B cell (primary cell): ENCODE measurements at regions of chr17 and their contacts with region 1.

Region 1: DNA sequence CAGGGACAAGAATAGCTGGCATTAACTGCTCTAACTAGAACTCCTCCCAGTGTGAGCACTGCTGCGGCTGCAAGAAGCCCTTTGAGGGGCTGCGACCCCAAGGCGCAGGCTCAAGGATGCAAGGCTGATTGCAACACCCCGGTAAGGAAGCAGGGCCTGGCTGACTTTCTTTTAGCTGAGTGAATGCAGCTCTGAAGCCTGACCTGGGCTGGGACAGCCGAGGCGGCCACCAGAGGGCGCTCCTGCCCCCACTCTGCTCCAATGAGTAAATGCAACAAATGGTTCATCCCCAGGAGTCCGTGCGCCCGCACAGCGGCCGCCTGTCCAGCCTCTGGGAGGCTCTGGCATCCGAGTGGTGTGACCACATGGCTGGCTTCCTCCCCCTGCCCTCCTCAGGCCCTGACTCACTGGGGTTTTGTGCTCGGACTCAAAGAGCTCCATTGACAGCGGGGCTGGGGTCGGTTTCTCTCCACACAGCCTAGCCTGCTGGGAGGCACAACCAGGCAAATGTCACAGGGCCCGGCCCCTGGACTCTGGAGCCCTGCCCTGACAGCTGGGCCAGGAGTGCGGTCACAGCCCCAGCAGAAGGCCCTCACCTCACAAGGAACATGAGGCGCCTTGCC is at the start of gene SMIM5:
- DNase-seq: peak; percentile 86
- ATAC-seq: peak; percentile 85
- H3K4me3 ChIP-seq: no peak within 1 kb of the TSS
- H3K4me3 Mint-ChIP-seq: no peak within 1 kb of the TSS
- H3K27ac ChIP-seq: no peak within 1 kb of the TSS
- H3K27ac Mint-ChIP-seq: no peak within 1 kb of the TSS
- H3K4me1 ChIP-seq: peaks cover 9 to 18% of the 10 kb centered on the region in 2 donors
- H3K4me1 Mint-ChIP-seq: peaks cover 13% of the 10 kb centered on the region
- H3K27me3 ChIP-seq: no peaks in the 10 kb centered on the region
- H3K27me3 Mint-ChIP-seq: no peaks in the 10 kb centered on the region
- CTCF ChIP-seq: peak; percentile 95
- total RNA-seq, gene SMIM5: 0.61 and 0.62 TPM in 2 replicates

Region 2: GRCh38 chr17:75430159-75430974 is 202.6 kb before region 1 on chr17:
- CTCF ChIA-PET with region 1: interaction called, 20 read pairs
- POLR2A ChIA-PET with region 1: no interaction called
- intact Hi-C with region 1: loop called (anchors 1 kb)
- DNase-seq: no peak
- ATAC-seq: no peak
- H3K4me3 ChIP-seq: no peak overlapping the region
- H3K4me3 Mint-ChIP-seq: no peak overlapping the region
- H3K27ac ChIP-seq: no peak overlapping the region
- H3K27ac Mint-ChIP-seq: no peak overlapping the region
- H3K4me1 ChIP-seq: peaks cover 6 to 7% of the 10 kb centered on the region in 2 donors
- H3K4me1 Mint-ChIP-seq: peaks cover 11% of the 10 kb centered on the region
- H3K27me3 ChIP-seq: peaks cover 0 to 4% (median 0%) of the 10 kb centered on the region in 4 experiments
- H3K27me3 Mint-ChIP-seq: peaks cover 15% of the 10 kb centered on the region
- CTCF ChIP-seq: no peak

Region 3: DNA sequence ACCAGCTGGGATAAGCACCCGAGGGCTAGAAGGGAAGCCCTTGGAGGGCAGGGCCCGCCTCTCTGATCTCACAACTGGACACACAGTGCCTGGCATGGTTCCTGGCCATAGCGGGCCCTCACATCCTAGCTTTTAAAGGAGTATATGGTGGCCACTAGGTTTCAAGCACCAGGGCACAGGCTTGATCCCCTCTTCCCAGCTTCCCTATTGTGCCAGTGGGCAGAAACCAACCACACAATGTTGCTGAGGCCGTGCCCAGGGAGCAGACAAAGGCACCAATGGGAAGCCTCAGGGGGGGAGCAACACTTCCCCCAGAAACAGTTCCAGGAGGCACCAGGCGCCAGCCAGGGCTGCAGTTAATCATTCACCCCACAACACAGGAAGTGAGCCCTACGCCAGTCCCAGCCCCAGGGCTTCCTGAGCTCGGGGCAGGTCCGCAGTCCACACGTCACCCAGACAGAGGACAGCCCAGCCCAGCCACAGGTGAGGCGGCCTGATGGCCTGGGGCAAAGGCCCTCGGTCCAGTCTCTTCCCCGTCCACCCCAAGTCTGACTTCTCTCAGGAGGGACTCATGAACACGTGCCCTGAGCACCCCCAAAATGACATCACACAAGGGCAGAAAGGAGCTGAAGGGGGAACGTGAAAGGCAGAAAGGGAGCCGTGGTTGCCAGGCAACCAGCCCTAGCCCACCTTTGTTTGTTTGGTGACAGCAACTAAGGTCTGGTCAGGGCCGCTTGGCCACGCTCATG is 13.1 kb after region 1 on chr17:
- CTCF ChIA-PET with region 1: interaction called, 78 read pairs
- POLR2A ChIA-PET with region 1: no interaction called
- intact Hi-C with region 1: no loop called
- DNase-seq: peak; percentile 59
- ATAC-seq: peak; percentile 64
- H3K4me3 ChIP-seq: no peak overlapping the region
- H3K4me3 Mint-ChIP-seq: peak overlapping the region; percentile 49
- H3K27ac ChIP-seq: peak overlapping the region; percentile 18 to 66
- H3K27ac Mint-ChIP-seq: peak overlapping the region; percentile 70
- H3K4me1 ChIP-seq: peaks cover 8 to 12% of the 10 kb centered on the region in 2 donors
- H3K4me1 Mint-ChIP-seq: peaks cover 13% of the 10 kb centered on the region
- H3K27me3 ChIP-seq: no peaks in the 10 kb centered on the region
- H3K27me3 Mint-ChIP-seq: no peaks in the 10 kb centered on the region
- CTCF ChIP-seq: no peak

Region 4: DNA sequence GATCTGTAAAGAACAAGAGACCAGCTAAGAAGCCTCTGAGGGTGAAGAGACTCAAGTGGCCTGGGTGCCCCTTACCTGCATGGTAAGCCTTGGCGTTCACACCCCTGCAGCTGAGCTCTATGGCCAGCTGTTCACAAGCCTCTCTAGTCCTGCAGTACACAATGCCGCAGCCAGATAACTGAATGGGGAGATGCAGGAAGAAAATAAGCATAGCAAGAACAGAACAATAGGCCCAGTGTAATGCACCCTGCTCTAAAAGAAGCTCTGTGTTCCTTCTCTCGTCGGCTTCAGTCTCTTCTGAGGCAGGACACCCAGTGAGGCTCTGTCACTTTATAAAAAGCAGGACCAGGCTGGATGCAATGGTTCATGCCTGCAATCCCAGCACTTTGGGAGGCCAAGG is 28.6 kb after region 1 on chr17:
- CTCF ChIA-PET with region 1: interaction called, 23 read pairs
- POLR2A ChIA-PET with region 1: interaction called, 3 read pairs
- intact Hi-C with region 1: no loop called
- DNase-seq: no peak
- ATAC-seq: no peak
- H3K4me3 ChIP-seq: no peak overlapping the region
- H3K4me3 Mint-ChIP-seq: no peak overlapping the region
- H3K27ac ChIP-seq: no peak overlapping the region
- H3K27ac Mint-ChIP-seq: peak overlapping the region; percentile 34
- H3K4me1 ChIP-seq: peaks cover 29 to 32% of the 10 kb centered on the region in 2 donors
- H3K4me1 Mint-ChIP-seq: peaks cover 29% of the 10 kb centered on the region
- H3K27me3 ChIP-seq: no peaks in the 10 kb centered on the region
- H3K27me3 Mint-ChIP-seq: no peaks in the 10 kb centered on the region
- CTCF ChIP-seq: no peak

Region 5: GRCh38 chr17:75673487-75673886 is 40.5 kb after region 1 on chr17:
- CTCF ChIA-PET with region 1: interaction called, 44 read pairs
- POLR2A ChIA-PET with region 1: no interaction called
- intact Hi-C with region 1: loop called (anchors 1 kb)
- DNase-seq: no peak
- ATAC-seq: no peak
- H3K4me3 ChIP-seq: no peak overlapping the region
- H3K4me3 Mint-ChIP-seq: no peak overlapping the region
- H3K27ac ChIP-seq: no peak overlapping the region
- H3K27ac Mint-ChIP-seq: no peak overlapping the region
- H3K4me1 ChIP-seq: peaks cover 0 to 2% of the 10 kb centered on the region in 2 donors
- H3K4me1 Mint-ChIP-seq: peaks cover 20% of the 10 kb centered on the region
- H3K27me3 ChIP-seq: no peaks in the 10 kb centered on the region
- H3K27me3 Mint-ChIP-seq: no peaks in the 10 kb centered on the region
- CTCF ChIP-seq: no peak

Region 6: GRCh38 chr17:75684924-75685323 is 52.0 kb after region 1 on chr17:
- CTCF ChIA-PET with region 1: interaction called, 11 read pairs
- POLR2A ChIA-PET with region 1: no interaction called
- intact Hi-C with region 1: no loop called
- DNase-seq: no peak
- ATAC-seq: no peak
- H3K4me3 ChIP-seq: no peak overlapping the region
- H3K4me3 Mint-ChIP-seq: no peak overlapping the region
- H3K27ac ChIP-seq: no peak overlapping the region
- H3K27ac Mint-ChIP-seq: no peak overlapping the region
- H3K4me1 ChIP-seq: peaks cover 33 to 46% of the 10 kb centered on the region in 2 donors
- H3K4me1 Mint-ChIP-seq: peaks cover 51% of the 10 kb centered on the region
- H3K27me3 ChIP-seq: no peaks in the 10 kb centered on the region
- H3K27me3 Mint-ChIP-seq: no peaks in the 10 kb centered on the region
- CTCF ChIP-seq: no peak

Region 7: GRCh38 chr17:75738218-75738802 is 105.3 kb after region 1 on chr17:
- CTCF ChIA-PET with region 1: interaction called, 17 read pairs
- POLR2A ChIA-PET with region 1: no interaction called
- intact Hi-C with region 1: no loop called
- DNase-seq: no peak
- ATAC-seq: peak; percentile 24
- H3K4me3 ChIP-seq: no peak overlapping the region
- H3K4me3 Mint-ChIP-seq: no peak overlapping the region
- H3K27ac ChIP-seq: no peak overlapping the region
- H3K27ac Mint-ChIP-seq: no peak overlapping the region
- H3K4me1 ChIP-seq: peaks cover 4 to 10% of the 10 kb centered on the region in 2 donors
- H3K4me1 Mint-ChIP-seq: peaks cover 4% of the 10 kb centered on the region
- H3K27me3 ChIP-seq: peaks cover 0 to 4% (median 0%) of the 10 kb centered on the region in 4 experiments
- H3K27me3 Mint-ChIP-seq: no peaks in the 10 kb centered on the region
- CTCF ChIP-seq: no peak

Region 8: GRCh38 chr17:75834944-75835670 is 202.1 kb after region 1 on chr17:
- CTCF ChIA-PET with region 1: no interaction called
- POLR2A ChIA-PET with region 1: no interaction called
- intact Hi-C with region 1: no loop called
- DNase-seq: no peak
- ATAC-seq: no peak
- H3K4me3 ChIP-seq: no peak overlapping the region
- H3K4me3 Mint-ChIP-seq: no peak overlapping the region
- H3K27ac ChIP-seq: no peak overlapping the region
- H3K27ac Mint-ChIP-seq: no peak overlapping the region
- H3K4me1 ChIP-seq: peaks cover 4 to 5% of the 10 kb centered on the region in 2 donors
- H3K4me1 Mint-ChIP-seq: peaks cover 13% of the 10 kb centered on the region
- H3K27me3 ChIP-seq: no peaks in the 10 kb centered on the region
- H3K27me3 Mint-ChIP-seq: no peaks in the 10 kb centered on the region
- CTCF ChIP-seq: no peak